Activated CD4-positive, alpha-beta T cell treated with anti-CD3 and anti-CD28 coated beads for 36 hours (primary cell): ENCODE measurements at regions of chr19 and their contacts with region 1.

Region 1: DNA sequence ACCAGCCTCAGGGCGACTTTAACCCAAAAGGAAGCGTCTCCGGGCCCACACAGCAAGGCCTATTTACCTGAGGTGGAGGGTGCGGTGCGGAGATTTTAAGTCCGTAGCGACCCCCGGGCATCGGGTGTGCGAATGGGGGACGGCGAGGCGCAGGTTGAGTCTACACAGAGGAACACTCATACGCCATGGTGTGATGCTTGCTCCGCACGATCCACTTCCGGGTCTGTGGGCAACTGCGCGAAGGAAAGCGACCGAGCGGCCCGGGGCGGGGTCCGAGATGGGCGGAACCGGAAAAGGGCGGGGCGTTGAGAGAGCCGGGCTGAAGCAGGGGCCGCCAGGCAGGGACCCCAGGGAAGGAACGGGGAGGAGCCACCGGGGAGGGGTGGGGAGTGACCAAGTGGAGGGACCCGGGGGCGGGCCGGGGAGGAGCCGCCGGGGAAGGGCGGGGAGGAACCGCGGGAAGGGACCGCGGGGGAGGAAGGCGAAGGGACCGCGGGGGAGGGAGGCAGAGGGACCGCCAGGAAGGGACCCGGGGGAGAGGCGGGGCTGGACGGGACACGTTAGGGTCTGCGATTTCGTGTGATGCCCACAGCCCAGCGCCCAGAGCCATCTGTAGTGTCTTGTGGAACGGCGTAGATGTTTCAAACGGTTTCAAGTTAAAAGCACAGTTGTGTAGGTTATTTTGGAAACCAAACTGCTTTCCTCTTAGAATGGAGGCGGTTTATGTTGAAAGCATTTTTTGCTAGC is at the start of gene ZNF160:
- DNase-seq: peak; percentile 100
- ATAC-seq: peak; percentile 96
- H3K4me3 Mint-ChIP-seq: peak within 1 kb of the TSS; percentile 87
- H3K27ac Mint-ChIP-seq: peak within 1 kb of the TSS; percentile 91
- H3K4me1 Mint-ChIP-seq: peaks cover 18% of the 10 kb centered on the region
- H3K27me3 Mint-ChIP-seq: no peaks in the 10 kb centered on the region
- total RNA-seq, gene ZNF160: 42.2 to 53.0 TPM

Region 2: DNA sequence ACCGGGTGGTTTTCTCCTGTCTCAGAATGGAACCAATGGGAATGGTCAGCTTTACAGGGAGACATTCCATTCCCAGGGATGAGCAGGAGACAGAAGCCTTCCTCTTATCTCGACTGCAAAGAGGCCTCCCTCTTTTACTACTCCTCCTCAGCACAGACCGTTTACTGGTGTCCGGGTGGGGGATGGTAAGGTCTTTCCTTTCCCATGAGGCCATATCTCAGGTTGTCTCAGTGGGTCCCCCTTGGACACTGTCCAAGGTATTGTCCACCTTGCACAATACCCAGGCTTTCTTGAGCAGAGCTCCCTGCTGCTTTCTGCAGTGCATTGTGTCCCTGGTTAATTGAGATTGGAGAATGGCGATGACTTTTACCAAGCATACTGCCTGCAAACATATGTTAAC is 583.4 kb before region 1 on chr19:
- CTCF ChIA-PET with region 1: no interaction called
- POLR2A ChIA-PET with region 1: no interaction called
- intact Hi-C with region 1: no loop called
- DNase-seq: no peak
- ATAC-seq: no peak
- H3K4me3 Mint-ChIP-seq: no peak overlapping the region
- H3K27ac Mint-ChIP-seq: no peak overlapping the region
- H3K4me1 Mint-ChIP-seq: no peaks in the 10 kb centered on the region
- H3K27me3 Mint-ChIP-seq: no peaks in the 10 kb centered on the region

Region 3: GRCh38 chr19:52637718-52638585 is 465.4 kb before region 1 on chr19 and contains the start of gene ZNF83:
- CTCF ChIA-PET with region 1: no interaction called
- POLR2A ChIA-PET with region 1: no interaction called
- intact Hi-C with region 1: loop called in 1 of 2 experiments (anchors 1 kb)
- DNase-seq: peak; percentile 99
- ATAC-seq: peak; percentile 97
- H3K4me3 Mint-ChIP-seq: peak within 1 kb of the TSS; percentile 92
- H3K27ac Mint-ChIP-seq: peak within 1 kb of the TSS; percentile 96
- H3K4me1 Mint-ChIP-seq: peaks cover 13% of the 10 kb centered on the region
- H3K27me3 Mint-ChIP-seq: no peaks in the 10 kb centered on the region
- total RNA-seq, gene ZNF83: 23.8 to 27.5 TPM

Region 4: GRCh38 chr19:52942386-52943133 is 160.8 kb before region 1 on chr19:
- CTCF ChIA-PET with region 1: no interaction called
- POLR2A ChIA-PET with region 1: no interaction called
- intact Hi-C with region 1: loop called in 1 of 2 experiments (anchors 1 kb)
- DNase-seq: peak; percentile 97
- ATAC-seq: peak; percentile 99
- H3K4me3 Mint-ChIP-seq: peak overlapping the region; percentile 90
- H3K27ac Mint-ChIP-seq: peak overlapping the region; percentile 91
- H3K4me1 Mint-ChIP-seq: peaks cover 18% of the 10 kb centered on the region
- H3K27me3 Mint-ChIP-seq: no peaks in the 10 kb centered on the region

Region 5: GRCh38 chr19:53091413-53092254 is 11.7 kb before region 1 on chr19:
- CTCF ChIA-PET with region 1: no interaction called
- POLR2A ChIA-PET with region 1: no interaction called
- intact Hi-C with region 1: no loop called
- DNase-seq: no peak
- ATAC-seq: no peak
- H3K4me3 Mint-ChIP-seq: no peak overlapping the region
- H3K27ac Mint-ChIP-seq: no peak overlapping the region
- H3K4me1 Mint-ChIP-seq: no peaks in the 10 kb centered on the region
- H3K27me3 Mint-ChIP-seq: no peaks in the 10 kb centered on the region

Region 6: DNA sequence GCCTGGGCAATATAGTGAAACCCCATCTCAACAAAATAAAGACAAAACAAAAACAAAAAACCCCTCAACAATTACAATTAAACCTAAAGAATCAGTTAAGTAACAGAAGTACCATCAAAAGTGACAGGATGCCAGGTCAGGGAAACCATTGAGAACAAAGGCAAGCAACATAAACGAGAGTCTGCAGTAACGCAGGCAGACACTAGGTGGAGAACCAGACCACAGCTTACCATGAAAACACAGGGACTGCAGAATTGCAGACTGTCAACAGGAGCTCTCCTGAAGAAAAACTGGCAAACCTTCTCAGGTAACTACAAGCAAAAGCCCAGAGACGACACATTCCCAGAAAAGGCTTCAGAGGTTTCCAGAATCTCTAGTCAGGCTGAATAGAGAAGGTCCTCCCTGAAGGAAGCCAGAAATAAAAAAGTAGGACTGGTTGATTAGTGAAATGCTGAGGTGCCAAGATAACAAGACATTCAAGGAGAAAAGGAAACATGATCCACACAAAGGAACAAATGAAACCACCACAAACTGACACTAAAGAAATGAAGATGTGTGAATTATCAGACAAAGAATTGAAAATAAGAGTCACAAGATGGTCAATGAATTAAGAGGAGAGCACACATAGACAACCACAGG is 92.0 kb after region 1 on chr19:
- CTCF ChIA-PET with region 1: no interaction called
- POLR2A ChIA-PET with region 1: no interaction called
- intact Hi-C with region 1: loop called (anchors 1 kb)
- DNase-seq: peak; percentile 83
- ATAC-seq: peak; percentile 50
- H3K4me3 Mint-ChIP-seq: peak overlapping the region; percentile 22
- H3K27ac Mint-ChIP-seq: peak overlapping the region; percentile 8
- H3K4me1 Mint-ChIP-seq: peaks cover 33% of the 10 kb centered on the region
- H3K27me3 Mint-ChIP-seq: no peaks in the 10 kb centered on the region

Region 7: DNA sequence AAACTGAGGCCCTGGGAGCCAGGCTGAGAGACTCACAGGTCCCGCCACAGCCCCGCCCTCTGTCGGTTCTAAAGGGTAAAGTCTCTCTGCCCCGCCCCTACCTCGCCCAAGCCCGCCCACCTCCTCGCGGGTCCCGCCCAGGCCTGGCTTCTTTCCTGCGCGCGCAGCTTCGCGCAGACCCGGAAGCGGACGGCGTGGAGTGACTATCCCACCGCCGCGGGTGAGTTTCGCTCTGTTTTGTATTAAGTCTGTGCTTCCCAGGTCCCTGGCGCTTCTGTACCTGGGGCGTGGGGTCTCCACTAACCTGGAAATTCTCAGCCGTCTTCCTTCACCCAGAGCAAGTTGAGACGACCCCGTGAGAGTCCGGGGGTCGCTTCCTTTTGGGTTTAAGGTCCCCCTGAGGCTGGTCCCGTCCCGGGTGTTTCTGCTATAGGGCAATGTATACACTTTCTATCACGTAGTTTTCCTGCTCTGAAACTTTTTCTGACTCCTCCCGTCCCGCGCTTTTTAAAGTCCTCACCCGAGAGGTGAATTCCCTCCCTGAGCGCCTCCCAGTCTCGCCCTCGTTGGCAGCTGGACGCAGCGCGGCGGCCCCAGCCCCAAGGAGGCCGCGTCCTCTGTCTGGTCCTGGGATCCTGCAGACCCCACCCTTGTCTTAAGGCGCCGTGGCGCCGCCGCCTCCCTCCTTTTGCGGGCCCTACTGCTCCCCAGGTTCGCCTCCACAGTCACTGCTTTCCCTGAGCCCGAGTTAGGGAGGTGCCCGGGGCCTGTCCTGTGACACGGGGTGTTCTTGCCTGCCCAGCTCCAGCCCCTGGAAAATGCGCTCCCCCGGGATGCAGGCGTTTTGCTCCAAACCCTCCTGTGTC is 291.8 kb after region 1 on chr19 and contains the start of gene ZNF765:
- CTCF ChIA-PET with region 1: no interaction called
- POLR2A ChIA-PET with region 1: no interaction called
- intact Hi-C with region 1: loop called in 1 of 2 experiments (anchors 1 kb)
- DNase-seq: peak; percentile 98
- ATAC-seq: peak; percentile 99
- H3K4me3 Mint-ChIP-seq: peak within 1 kb of the TSS; percentile 84
- H3K27ac Mint-ChIP-seq: peak within 1 kb of the TSS; percentile 89
- H3K4me1 Mint-ChIP-seq: peaks cover 25% of the 10 kb centered on the region
- H3K27me3 Mint-ChIP-seq: no peaks in the 10 kb centered on the region
- total RNA-seq, gene ZNF765: 10.7 to 10.9 TPM

Region 8: DNA sequence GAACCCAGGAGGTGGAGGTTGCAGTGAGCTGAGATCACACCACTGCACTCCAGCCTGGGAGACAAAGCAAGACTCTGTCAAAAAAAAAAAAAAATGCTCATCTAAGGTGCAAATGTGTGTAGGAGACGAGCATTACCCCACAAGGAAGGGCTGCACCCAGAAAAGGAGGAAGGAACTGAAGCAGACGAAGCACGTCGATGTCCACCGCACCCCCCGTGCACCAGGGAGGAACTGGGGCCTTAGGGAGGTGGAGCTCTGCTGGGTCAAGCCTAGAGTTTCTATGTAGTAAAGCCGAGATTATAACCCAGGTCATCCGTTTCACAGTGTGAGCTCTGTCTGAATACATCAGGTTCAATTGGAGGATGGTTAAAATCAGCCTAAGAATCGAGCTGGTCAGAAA is 959.3 kb after region 1 on chr19:
- CTCF ChIA-PET with region 1: no interaction called
- POLR2A ChIA-PET with region 1: no interaction called
- intact Hi-C with region 1: no loop called
- DNase-seq: no peak
- ATAC-seq: no peak
- H3K4me3 Mint-ChIP-seq: no peak overlapping the region
- H3K27ac Mint-ChIP-seq: no peak overlapping the region
- H3K4me1 Mint-ChIP-seq: no peaks in the 10 kb centered on the region
- H3K27me3 Mint-ChIP-seq: peaks cover 11% of the 10 kb centered on the region

Region 9: GRCh38 chr19:54115109-54116063 is 1012.0 kb after region 1 on chr19 and contains the starts of genes PRPF31 and TFPT:
- CTCF ChIA-PET with region 1: no interaction called
- POLR2A ChIA-PET with region 1: no interaction called
- intact Hi-C with region 1: loop called in 1 of 2 experiments (anchors 5 kb)
- DNase-seq: peak; percentile 97
- ATAC-seq: peak; percentile 94
- H3K4me3 Mint-ChIP-seq: peak within 1 kb of the TSS; percentile 83
- H3K27ac Mint-ChIP-seq: peak within 1 kb of the TSS; percentile 96
- H3K4me1 Mint-ChIP-seq: peaks cover 25% of the 10 kb centered on the region
- H3K27me3 Mint-ChIP-seq: no peaks in the 10 kb centered on the region
- total RNA-seq, gene PRPF31: 85.5 to 115 TPM
- total RNA-seq, gene TFPT: 28.5 to 39.3 TPM